Activated CD4-positive, alpha-beta memory T cell treated with anti-CD3 and anti-CD28 coated beads for 36 hours (primary cell): ENCODE measurements at regions of chr1 and their contacts with region 1.

Region 1: GRCh38 chr1:53196485-53197270 is at the start of gene CPT2:
- DNase-seq: peak; percentile 95
- H3K4me3 Mint-ChIP-seq: peak within 1 kb of the TSS; percentile 97
- H3K27ac Mint-ChIP-seq: peak within 1 kb of the TSS; percentile 98
- H3K4me1 Mint-ChIP-seq: peaks cover 16% of the 10 kb centered on the region
- H3K27me3 Mint-ChIP-seq: no peaks in the 10 kb centered on the region
- total RNA-seq, gene CPT2: 19.6 to 20.7 TPM

Region 2: GRCh38 chr1:52726265-52727113 is 470.2 kb before region 1 on chr1 and contains the start of gene ZYG11B:
- CTCF ChIA-PET with region 1: no interaction called
- POLR2A ChIA-PET with region 1: no interaction called
- intact Hi-C with region 1: loop called (anchors 2 kb)
- DNase-seq: peak; percentile 94
- H3K4me3 Mint-ChIP-seq: peak within 1 kb of the TSS; percentile 81
- H3K27ac Mint-ChIP-seq: peak within 1 kb of the TSS; percentile 77
- H3K4me1 Mint-ChIP-seq: peaks cover 29% of the 10 kb centered on the region
- H3K27me3 Mint-ChIP-seq: no peaks in the 10 kb centered on the region
- total RNA-seq, gene ZYG11B: 14.2 to 14.8 TPM

Region 3: GRCh38 chr1:53220171-53220961 is 23.7 kb after region 1 on chr1 and contains the start of gene CZIB:
- CTCF ChIA-PET with region 1: no interaction called
- POLR2A ChIA-PET with region 1: interaction called, 5 read pairs
- intact Hi-C with region 1: loop called (anchors 1 kb)
- DNase-seq: peak; percentile 97
- H3K4me3 Mint-ChIP-seq: peak within 1 kb of the TSS; percentile 89
- H3K27ac Mint-ChIP-seq: peak within 1 kb of the TSS; percentile 95
- H3K4me1 Mint-ChIP-seq: peaks cover 21% of the 10 kb centered on the region
- H3K27me3 Mint-ChIP-seq: no peaks in the 10 kb centered on the region
- total RNA-seq, gene CZIB: 34.0 to 37.4 TPM

Region 4: DNA sequence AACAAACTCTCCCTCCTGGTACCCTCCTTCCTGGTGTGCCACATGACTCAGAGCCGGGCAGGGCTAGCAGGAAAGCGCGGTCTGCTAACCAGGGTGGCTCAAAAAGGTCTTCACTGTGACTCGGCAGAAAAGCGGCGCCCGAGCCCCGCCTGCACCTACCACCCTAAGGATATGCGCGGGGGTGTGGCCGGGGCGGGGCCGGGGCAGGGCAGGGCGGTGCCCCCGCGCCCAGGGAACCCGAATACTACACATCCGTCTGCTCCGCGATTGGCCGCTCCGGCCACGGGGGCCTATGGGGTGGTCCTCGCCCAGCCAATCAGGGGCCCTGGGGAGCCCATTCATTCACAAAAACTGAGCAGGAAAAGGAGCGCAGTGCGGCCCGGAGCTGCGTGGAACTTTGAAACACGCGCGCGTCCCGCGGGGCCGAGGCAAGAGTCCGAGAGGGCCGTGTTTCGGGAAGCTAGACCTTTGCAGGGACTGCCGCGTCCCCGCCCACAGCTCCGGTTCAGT is 129.5 kb after region 1 on chr1:
- CTCF ChIA-PET with region 1: no interaction called
- POLR2A ChIA-PET with region 1: interaction called, 3 read pairs
- intact Hi-C with region 1: loop called (anchors 5 kb)
- DNase-seq: peak; percentile 98
- H3K4me3 Mint-ChIP-seq: peak overlapping the region; percentile 95
- H3K27ac Mint-ChIP-seq: peak overlapping the region; percentile 97
- H3K4me1 Mint-ChIP-seq: peaks cover 23% of the 10 kb centered on the region
- H3K27me3 Mint-ChIP-seq: no peaks in the 10 kb centered on the region

Region 5: DNA sequence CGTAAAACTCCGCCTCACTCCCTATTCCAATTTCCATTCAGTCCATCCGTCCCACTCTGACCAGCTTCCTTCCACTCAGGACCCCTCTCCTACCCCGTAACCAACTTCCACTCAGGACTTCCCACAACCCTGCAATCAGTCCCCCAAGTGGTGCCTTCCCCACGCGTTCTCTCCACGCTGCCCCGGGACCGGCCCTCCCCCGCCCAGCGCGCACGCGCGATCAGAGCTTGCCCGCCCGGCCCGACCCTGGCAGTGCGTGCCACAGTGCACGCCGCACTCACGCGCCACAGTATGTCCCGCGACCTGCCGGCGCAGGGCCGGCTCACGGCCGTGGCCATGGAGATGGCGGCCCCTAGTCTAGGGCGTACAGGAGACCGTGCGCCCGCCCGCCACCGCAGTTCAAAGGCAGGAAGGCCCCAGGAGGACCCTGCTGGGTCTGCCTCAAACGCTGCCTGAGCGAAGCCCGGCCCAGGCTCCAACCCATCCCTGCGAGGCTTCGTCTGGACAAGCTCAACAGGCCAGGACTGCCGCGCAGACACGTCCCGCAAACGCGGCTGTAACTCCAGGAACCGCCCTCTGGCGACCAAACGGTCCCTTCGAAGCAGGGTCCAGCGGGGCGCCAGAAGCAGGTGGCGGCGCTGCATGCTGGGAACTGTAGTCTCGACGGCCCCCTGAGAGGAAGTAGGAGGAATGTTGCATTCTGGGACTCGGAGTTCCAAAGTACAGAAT is 641.4 kb after region 1 on chr1 and contains the start of gene NDC1:
- CTCF ChIA-PET with region 1: no interaction called
- POLR2A ChIA-PET with region 1: no interaction called
- intact Hi-C with region 1: loop called (anchors 2 kb)
- DNase-seq: peak; percentile 91
- H3K4me3 Mint-ChIP-seq: peak within 1 kb of the TSS; percentile 90
- H3K27ac Mint-ChIP-seq: peak within 1 kb of the TSS; percentile 96
- H3K4me1 Mint-ChIP-seq: peaks cover 23% of the 10 kb centered on the region
- H3K27me3 Mint-ChIP-seq: peaks cover 2% of the 10 kb centered on the region
- total RNA-seq, gene NDC1: 29.6 to 32.0 TPM